K562 (cell line): ENCODE measurements at regions of chr3 and their contacts with region 1.

Region 1: GRCh38 chr3:156702367-156702766 is 28.0 kb downstream of the TIPARP start:
- DNase-seq: no peak
- ATAC-seq: no peak
- H3K4me3 ChIP-seq: no peak overlapping the region
- H3K27ac ChIP-seq: no peak overlapping the region
- H3K4me1 ChIP-seq: no peaks in the 10 kb centered on the region
- H3K27me3 ChIP-seq: no peaks in the 10 kb centered on the region
- CTCF ChIP-seq: no peak
- EP300 ChIP-seq: no peak
- POLR2A ChIP-seq: no peak
- RAD21 ChIP-seq: no peak

Region 2: DNA sequence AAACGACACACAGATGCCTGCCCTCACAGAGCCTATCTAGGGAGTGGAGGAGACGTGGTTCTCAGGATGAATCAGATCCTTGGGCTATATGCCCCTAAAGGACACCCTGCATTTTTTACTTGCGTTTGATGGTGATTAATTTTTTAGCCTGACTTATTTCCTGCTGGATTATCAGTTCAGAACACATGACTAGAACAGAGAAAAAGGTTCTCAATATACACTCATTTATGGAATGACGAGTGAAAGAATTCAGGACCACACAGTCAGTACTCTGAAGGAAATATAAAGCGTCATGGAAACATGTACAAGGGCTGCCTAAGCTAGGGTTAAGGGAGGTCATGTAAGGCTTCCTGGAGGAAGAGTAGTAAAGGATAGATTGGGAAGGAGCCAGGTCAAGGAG is 269.2 kb before region 1 on chr3:
- CTCF ChIA-PET with region 1: no interaction called
- POLR2A ChIA-PET with region 1: no interaction called
- in situ Hi-C with region 1: no loop called
- intact Hi-C with region 1: no loop called
- DNase-seq: no peak
- ATAC-seq: no peak
- H3K4me3 ChIP-seq: no peak overlapping the region
- H3K27ac ChIP-seq: no peak overlapping the region
- H3K4me1 ChIP-seq: no peaks in the 10 kb centered on the region
- H3K27me3 ChIP-seq: peaks cover 2 to 12% of the 10 kb centered on the region in 2 experiments; a peak in 3 of 5 replicates
- CTCF ChIP-seq: no peak
- EP300 ChIP-seq: no peak
- POLR2A ChIP-seq: no peak
- RAD21 ChIP-seq: no peak

Region 3: DNA sequence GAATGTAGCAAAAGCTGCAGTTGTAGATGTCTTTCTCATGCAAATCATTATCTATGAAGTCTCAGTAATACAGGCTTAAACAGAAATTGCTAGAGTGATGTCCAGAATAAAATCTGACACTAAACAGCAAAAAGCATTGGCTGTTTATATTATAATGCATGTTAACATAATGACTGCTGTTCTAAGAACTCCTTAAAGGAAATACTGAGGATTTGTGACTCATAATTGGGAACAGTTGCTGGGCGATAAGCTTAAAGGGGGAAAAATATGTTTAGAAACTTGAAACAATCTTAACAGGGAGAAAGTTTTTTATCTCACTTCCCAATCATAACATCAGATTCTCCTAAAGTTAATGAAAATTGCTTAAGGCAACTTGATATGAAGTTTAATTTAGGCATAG is 10.4 kb before region 1 on chr3:
- CTCF ChIA-PET with region 1: no interaction called
- POLR2A ChIA-PET with region 1: interaction called, 14 read pairs
- in situ Hi-C with region 1: no loop called
- intact Hi-C with region 1: no loop called
- DNase-seq: no peak
- ATAC-seq: no peak
- H3K4me3 ChIP-seq: no peak overlapping the region
- H3K27ac ChIP-seq: no peak overlapping the region
- H3K4me1 ChIP-seq: peaks cover 0 to 39% of the 10 kb centered on the region in 2 experiments; a peak in 3 of 5 replicates
- H3K27me3 ChIP-seq: no peaks in the 10 kb centered on the region
- CTCF ChIP-seq: no peak
- EP300 ChIP-seq: no peak
- POLR2A ChIP-seq: no peak
- RAD21 ChIP-seq: no peak